Activated CD4-positive, alpha-beta T cell treated with anti-CD3 and anti-CD28 coated beads for 36 hours (primary cell): ENCODE measurements at regions of chr15 and their contacts with region 1.

Region 1: GRCh38 chr15:51737280-51738017 is at the start of gene LYSMD2:
- DNase-seq: peak; percentile 81
- ATAC-seq: peak; percentile 45
- H3K4me3 Mint-ChIP-seq: peak within 1 kb of the TSS; percentile 77
- H3K27ac Mint-ChIP-seq: peak within 1 kb of the TSS; percentile 88
- H3K4me1 Mint-ChIP-seq: peaks cover 55% of the 10 kb centered on the region
- H3K27me3 Mint-ChIP-seq: no peaks in the 10 kb centered on the region
- total RNA-seq, gene LYSMD2: 19.1 to 20.1 TPM

Region 2: DNA sequence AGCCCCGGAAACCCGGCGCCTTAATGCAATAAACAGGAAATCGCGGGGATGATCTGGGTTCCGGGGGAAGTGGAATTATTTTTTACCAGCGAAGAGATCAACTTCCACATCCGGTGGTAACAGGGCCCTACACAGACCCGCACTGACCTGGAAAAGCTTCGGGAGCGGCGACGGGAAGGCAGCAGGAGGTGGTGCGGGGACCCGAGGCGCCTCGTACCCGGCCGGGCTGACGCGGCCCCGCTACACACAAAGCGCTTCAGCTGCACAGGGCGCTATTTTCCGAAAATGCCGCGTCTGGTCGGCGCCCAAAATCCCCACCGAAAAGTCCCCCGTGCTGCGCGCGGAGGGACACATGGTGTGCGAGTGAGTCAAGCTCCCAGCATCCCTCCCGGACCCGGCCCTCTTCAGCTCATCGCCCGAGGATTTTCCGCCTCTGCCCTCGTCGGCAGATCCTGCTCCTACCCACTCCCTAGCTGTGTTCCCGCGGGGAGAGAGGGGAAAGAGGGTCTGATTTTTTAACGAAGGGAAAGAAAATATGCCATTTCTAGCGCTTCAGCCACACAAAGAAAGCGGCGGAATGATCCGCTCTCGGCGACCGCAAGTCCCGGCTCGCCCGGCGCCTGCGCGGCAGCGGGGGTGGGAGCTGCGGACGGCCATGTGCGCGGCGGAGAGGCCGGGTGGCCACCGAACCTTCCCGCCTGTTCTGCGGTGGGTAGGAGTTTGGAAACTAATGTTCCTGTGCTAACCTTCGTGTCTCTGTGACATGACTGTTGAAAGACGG is 1382.4 kb before region 1 on chr15 and contains the start of gene GABPB1:
- CTCF ChIA-PET with region 1: no interaction called
- POLR2A ChIA-PET with region 1: no interaction called
- intact Hi-C with region 1: loop called in 1 of 2 experiments (anchors 10 kb)
- DNase-seq: peak; percentile 94
- ATAC-seq: peak; percentile 42
- H3K4me3 Mint-ChIP-seq: peak within 1 kb of the TSS; percentile 99
- H3K27ac Mint-ChIP-seq: peak within 1 kb of the TSS; percentile 100
- H3K4me1 Mint-ChIP-seq: peaks cover 44% of the 10 kb centered on the region
- H3K27me3 Mint-ChIP-seq: no peaks in the 10 kb centered on the region
- total RNA-seq, gene GABPB1: 46.3 to 53.4 TPM

Region 3: DNA sequence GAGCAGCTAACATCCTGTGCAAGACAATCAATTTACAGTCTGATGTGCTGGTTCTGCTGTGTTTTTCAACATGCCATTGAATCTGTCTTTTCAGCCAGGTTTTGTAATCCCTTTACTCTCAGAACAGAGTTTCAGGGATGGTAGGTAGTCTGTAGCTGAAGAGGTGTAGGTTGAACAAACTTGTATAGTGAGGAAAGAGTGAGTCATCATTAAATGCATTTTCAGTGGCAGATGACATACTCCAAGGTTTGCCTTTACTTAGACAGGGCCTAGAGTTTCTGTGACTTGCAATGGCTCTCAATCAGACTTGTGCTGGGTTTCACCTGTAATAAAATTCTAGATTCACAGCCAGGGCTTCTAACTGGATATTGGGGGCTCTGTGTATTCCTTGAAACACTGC is 493.7 kb before region 1 on chr15:
- CTCF ChIA-PET with region 1: no interaction called
- POLR2A ChIA-PET with region 1: no interaction called
- intact Hi-C with region 1: loop called in 1 of 2 experiments (anchors 5 kb)
- DNase-seq: no peak
- ATAC-seq: peak; percentile 96
- H3K4me3 Mint-ChIP-seq: no peak overlapping the region
- H3K27ac Mint-ChIP-seq: no peak overlapping the region
- H3K4me1 Mint-ChIP-seq: peaks cover 13% of the 10 kb centered on the region
- H3K27me3 Mint-ChIP-seq: peaks cover 33% of the 10 kb centered on the region

Region 4: DNA sequence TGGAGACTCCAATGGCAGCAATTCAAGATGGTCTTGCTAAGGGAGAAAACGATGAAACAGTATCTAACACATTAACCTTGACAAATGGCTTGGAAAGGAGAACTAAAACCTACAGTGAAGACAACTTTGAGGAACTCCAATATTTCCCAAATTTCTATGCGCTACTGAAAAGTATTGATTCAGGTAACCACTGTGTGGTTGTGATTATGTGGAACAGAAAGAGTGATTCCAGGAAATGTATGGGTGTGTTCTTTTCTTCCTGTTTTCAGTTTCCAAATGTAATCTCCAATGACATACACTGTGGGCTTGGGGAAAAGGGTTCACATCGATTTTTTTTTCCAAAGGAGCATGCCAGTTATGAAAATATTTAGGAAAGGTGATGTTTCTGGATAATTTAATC is 45.3 kb before region 1 on chr15:
- CTCF ChIA-PET with region 1: no interaction called
- POLR2A ChIA-PET with region 1: no interaction called
- intact Hi-C with region 1: loop called in 1 of 2 experiments (anchors 5 kb)
- DNase-seq: no peak
- ATAC-seq: no peak
- H3K4me3 Mint-ChIP-seq: no peak overlapping the region
- H3K27ac Mint-ChIP-seq: no peak overlapping the region
- H3K4me1 Mint-ChIP-seq: peaks cover 13% of the 10 kb centered on the region
- H3K27me3 Mint-ChIP-seq: peaks cover 15% of the 10 kb centered on the region

Region 5: DNA sequence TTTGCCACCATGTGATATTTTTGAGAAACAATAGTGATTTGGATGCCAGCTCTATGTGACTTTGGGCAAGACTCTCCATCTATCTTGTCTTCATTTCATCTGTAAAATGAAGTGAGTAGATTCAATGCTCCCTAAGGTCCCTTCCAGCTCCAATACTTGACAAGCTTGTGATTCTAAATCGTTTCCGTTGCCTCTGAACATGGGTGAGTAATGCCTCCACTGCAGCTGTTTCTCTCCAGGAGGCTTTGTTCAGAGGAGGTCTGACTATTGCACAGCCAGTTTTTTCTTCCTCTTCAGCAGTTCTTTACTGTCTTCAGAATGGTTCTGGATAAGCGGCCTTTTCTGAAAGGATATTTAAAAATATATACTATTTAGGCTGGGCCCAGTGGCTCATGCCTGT is 77.2 kb after region 1 on chr15:
- CTCF ChIA-PET with region 1: no interaction called
- POLR2A ChIA-PET with region 1: no interaction called
- intact Hi-C with region 1: no loop called
- DNase-seq: no peak
- ATAC-seq: no peak
- H3K4me3 Mint-ChIP-seq: no peak overlapping the region
- H3K27ac Mint-ChIP-seq: no peak overlapping the region
- H3K4me1 Mint-ChIP-seq: no peaks in the 10 kb centered on the region
- H3K27me3 Mint-ChIP-seq: no peaks in the 10 kb centered on the region

Region 6: GRCh38 chr15:51829360-51830275 is 92.2 kb after region 1 on chr15 and contains the start of gene TMOD3:
- CTCF ChIA-PET with region 1: interaction called, 3 read pairs
- POLR2A ChIA-PET with region 1: interaction called, 3 read pairs
- intact Hi-C with region 1: loop called (anchors 1 to 2 kb)
- DNase-seq: peak; percentile 93
- ATAC-seq: peak; percentile 81
- H3K4me3 Mint-ChIP-seq: peak within 1 kb of the TSS; percentile 84
- H3K27ac Mint-ChIP-seq: peak within 1 kb of the TSS; percentile 89
- H3K4me1 Mint-ChIP-seq: peaks cover 46% of the 10 kb centered on the region
- H3K27me3 Mint-ChIP-seq: no peaks in the 10 kb centered on the region
- total RNA-seq, gene TMOD3: 52.4 to 55.7 TPM

Region 7: GRCh38 chr15:52018693-52019387 is 281.4 kb after region 1 on chr15 and contains the start of gene MAPK6:
- CTCF ChIA-PET with region 1: no interaction called
- POLR2A ChIA-PET with region 1: no interaction called
- intact Hi-C with region 1: loop called in 1 of 2 experiments (anchors 2 kb)
- DNase-seq: peak; percentile 97
- ATAC-seq: peak; percentile 76
- H3K4me3 Mint-ChIP-seq: peak within 1 kb of the TSS; percentile 86
- H3K27ac Mint-ChIP-seq: peak within 1 kb of the TSS; percentile 96
- H3K4me1 Mint-ChIP-seq: peaks cover 38% of the 10 kb centered on the region
- H3K27me3 Mint-ChIP-seq: peaks cover 5% of the 10 kb centered on the region
- total RNA-seq, gene MAPK6: 27.3 to 28.1 TPM